ENCODE measurements at regions of chr7 and their contacts with region 1.

Region 1: DNA sequence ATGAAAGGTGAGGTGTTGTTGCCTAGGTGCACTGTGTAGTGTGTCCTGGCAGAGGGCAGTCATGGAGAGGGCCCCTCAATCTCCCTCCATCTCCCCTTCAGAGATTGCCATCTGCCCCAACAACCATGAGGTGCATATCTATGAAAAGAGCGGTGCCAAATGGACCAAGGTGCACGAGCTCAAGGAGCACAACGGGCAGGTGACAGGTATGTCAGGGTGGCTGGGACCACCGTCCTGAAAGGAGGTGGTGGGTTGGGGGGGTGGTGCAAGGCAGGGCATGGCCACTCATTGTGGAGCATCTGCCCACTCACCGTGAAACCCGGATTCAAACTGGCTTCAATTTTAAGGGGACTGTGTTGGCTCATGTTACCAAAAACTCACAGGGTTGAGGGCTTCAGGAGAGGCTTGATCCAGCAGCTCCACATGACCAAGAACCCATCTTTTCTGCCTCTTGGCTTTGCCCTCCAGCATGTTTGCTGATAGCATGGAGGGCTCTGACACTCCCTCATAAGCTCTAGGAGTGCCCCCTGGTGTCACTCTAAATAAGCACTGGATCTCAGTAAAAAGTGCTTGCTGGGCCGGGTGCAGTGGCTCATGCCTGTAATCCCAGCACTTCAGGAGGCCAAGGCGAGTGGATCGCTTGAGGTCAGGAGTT is 12.2 kb downstream of the ARPC1B start:
- DNase-seq: peak; percentile 34 to 65 (median 47)
- H3K4me3 ChIP-seq: no peak overlapping the region
- H3K4me3 Mint-ChIP-seq: peak overlapping the region in 1 of 8 donors; percentile 59
- H3K27ac ChIP-seq: no peak overlapping the region
- H3K27ac Mint-ChIP-seq: peak overlapping the region; percentile 35 to 84 (median 75)
- H3K4me1 ChIP-seq: peaks cover 32% of the 10 kb centered on the region
- H3K4me1 Mint-ChIP-seq: peaks cover 4 to 40% (median 18%) of the 10 kb centered on the region in 4 donors
- H3K27me3 ChIP-seq: no peaks in the 10 kb centered on the region
- H3K27me3 Mint-ChIP-seq: no peaks in the 10 kb centered on the region

Region 2: DNA sequence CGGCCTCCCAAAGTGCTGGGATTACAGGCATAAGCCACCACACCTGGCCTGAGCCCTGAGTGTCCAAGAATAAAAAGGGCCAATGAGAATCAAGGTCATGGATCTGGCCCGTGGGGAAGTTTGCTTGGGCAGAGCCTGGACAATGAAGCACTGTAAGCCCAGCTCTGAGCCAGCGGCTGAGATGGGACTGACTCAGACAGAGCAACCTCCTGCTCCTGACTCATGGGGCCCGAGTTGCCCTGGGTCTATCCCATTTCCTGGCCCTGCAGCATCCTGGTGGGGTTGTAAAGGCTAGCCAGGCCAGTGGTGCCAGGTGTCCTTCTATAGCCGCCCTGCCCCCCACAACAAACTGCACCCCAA is 119.2 kb before region 1 on chr7:
- CTCF ChIA-PET with region 1: no interaction called
- POLR2A ChIA-PET with region 1: no interaction called
- intact Hi-C with region 1: no loop called
- DNase-seq: no peak
- H3K4me3 ChIP-seq: no peak overlapping the region
- H3K4me3 Mint-ChIP-seq: no peak overlapping the region
- H3K27ac ChIP-seq: no peak overlapping the region
- H3K27ac Mint-ChIP-seq: peak overlapping the region in 1 of 7 donors; percentile 35
- H3K4me1 ChIP-seq: no peaks in the 10 kb centered on the region
- H3K4me1 Mint-ChIP-seq: no peaks in the 10 kb centered on the region
- H3K27me3 ChIP-seq: no peaks in the 10 kb centered on the region
- H3K27me3 Mint-ChIP-seq: peaks cover 8 to 13% of the 10 kb centered on the region in 2 donors

Region 3: DNA sequence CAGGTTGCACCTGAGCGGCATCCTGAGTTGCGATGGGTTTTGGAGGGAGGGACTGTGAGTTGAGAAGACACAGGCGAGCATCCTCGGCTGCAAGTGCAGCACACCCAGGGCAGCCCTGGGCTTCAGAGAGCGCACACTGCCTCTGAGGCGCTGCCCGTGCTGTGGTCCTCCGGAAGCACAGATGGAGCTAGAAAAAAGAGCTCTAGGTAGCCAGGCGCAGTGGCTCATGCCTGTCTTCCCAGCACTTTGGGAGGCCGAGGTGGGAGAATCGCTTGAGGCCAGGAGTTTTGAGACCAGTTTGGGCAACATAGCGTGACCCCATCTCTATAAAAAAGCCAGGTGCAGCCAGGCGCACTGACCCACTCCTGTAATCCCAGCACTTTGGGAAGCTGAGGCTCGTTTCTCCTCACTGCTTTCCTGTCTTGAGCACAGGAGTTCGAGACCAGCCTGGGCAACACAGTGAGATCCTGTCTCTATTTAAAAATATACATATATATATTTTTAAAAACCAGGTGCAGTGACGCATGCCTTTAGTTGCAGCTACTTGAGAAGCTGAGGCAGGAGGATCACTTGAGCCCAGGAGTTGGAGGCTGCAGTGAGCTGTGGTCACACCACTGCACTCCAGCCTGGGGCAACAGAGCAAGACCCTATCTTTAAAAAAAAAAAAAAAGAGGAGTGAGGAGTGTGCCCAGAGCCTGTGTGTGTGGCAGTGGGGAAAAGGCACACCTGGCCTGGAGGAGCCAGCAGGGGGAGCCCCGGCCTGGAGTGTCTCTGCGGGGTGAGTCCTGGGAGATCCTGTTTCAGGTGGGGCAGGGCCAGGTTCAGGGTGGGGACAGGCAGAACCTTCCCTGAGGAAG is 21.5 kb before region 1 on chr7:
- CTCF ChIA-PET with region 1: interaction called, 28 read pairs
- POLR2A ChIA-PET with region 1: interaction called, 4 read pairs
- intact Hi-C with region 1: loop called (anchors 1 kb)
- DNase-seq: peak; percentile 62 to 70 (median 66)
- H3K4me3 ChIP-seq: no peak overlapping the region
- H3K4me3 Mint-ChIP-seq: no peak overlapping the region
- H3K27ac ChIP-seq: no peak overlapping the region
- H3K27ac Mint-ChIP-seq: peak overlapping the region in 4 of 7 donors; percentile 32 to 89 (median 50)
- H3K4me1 ChIP-seq: no peaks in the 10 kb centered on the region
- H3K4me1 Mint-ChIP-seq: no peaks in the 10 kb centered on the region
- H3K27me3 ChIP-seq: no peaks in the 10 kb centered on the region
- H3K27me3 Mint-ChIP-seq: no peaks in the 10 kb centered on the region